ENCODE measurements at regions of chr5 and their contacts with region 1.

Region 1: GRCh38 chr5:13987843-13988464 is 43.5 kb upstream of the DNAH5 start:
- DNase-seq: no peak
- ATAC-seq: peak; percentile 50
- H3K4me3 Mint-ChIP-seq: no peak overlapping the region
- H3K27ac Mint-ChIP-seq: no peak overlapping the region
- H3K4me1 Mint-ChIP-seq: peaks cover 2% of the 10 kb centered on the region
- H3K27me3 Mint-ChIP-seq: peaks cover 15% of the 10 kb centered on the region
- CTCF ChIP-seq: peak; percentile 86

Region 2: DNA sequence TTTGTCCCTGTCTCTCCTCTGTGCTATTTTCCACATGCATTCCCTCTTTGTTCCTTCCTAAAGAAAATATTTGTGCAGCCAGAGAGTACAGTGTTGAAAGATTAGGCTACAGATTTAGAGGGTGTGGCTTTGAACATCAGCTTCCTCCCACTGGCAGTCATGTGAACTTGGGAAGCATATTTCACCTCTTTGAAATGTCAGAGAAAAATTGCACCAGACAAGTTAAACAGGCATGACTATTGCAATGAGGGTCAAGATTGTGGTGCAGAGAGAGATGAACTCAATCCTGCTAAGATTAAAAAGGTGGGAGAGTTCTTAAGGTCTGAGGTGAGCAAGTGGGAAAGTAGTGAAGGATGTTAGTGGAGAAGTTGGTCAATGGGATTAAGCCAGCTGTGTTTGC is 684.5 kb before region 1 on chr5:
- CTCF ChIA-PET with region 1: no interaction called
- POLR2A ChIA-PET with region 1: no interaction called
- intact Hi-C with region 1: no loop called
- DNase-seq: no peak
- ATAC-seq: no peak
- H3K4me3 Mint-ChIP-seq: no peak overlapping the region
- H3K27ac Mint-ChIP-seq: no peak overlapping the region
- H3K4me1 Mint-ChIP-seq: no peaks in the 10 kb centered on the region
- H3K27me3 Mint-ChIP-seq: no peaks in the 10 kb centered on the region
- CTCF ChIP-seq: no peak

Region 3: DNA sequence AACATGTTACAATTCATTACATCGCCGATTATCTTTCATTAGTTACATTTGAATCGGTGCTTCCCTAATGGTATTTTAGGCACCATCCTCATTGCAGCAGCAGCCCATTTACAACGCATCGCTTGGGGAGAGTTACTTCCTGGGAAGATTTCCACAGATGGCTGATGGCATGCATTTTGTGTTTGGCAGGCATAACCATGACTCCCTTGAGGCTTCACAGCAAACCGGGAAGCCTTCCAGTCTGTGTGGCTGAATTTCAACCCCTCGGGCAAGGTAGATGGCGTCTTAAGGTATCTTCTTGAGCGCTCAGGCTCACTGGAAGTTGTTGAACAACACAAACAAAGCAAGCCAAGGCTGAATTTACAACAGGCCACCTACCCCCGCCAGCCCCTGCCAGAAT is 41.8 kb before region 1 on chr5:
- CTCF ChIA-PET with region 1: no interaction called
- POLR2A ChIA-PET with region 1: no interaction called
- intact Hi-C with region 1: no loop called
- DNase-seq: no peak
- ATAC-seq: no peak
- H3K4me3 Mint-ChIP-seq: no peak overlapping the region
- H3K27ac Mint-ChIP-seq: no peak overlapping the region
- H3K4me1 Mint-ChIP-seq: no peaks in the 10 kb centered on the region
- H3K27me3 Mint-ChIP-seq: peaks cover 3% of the 10 kb centered on the region
- CTCF ChIP-seq: no peak

Region 4: DNA sequence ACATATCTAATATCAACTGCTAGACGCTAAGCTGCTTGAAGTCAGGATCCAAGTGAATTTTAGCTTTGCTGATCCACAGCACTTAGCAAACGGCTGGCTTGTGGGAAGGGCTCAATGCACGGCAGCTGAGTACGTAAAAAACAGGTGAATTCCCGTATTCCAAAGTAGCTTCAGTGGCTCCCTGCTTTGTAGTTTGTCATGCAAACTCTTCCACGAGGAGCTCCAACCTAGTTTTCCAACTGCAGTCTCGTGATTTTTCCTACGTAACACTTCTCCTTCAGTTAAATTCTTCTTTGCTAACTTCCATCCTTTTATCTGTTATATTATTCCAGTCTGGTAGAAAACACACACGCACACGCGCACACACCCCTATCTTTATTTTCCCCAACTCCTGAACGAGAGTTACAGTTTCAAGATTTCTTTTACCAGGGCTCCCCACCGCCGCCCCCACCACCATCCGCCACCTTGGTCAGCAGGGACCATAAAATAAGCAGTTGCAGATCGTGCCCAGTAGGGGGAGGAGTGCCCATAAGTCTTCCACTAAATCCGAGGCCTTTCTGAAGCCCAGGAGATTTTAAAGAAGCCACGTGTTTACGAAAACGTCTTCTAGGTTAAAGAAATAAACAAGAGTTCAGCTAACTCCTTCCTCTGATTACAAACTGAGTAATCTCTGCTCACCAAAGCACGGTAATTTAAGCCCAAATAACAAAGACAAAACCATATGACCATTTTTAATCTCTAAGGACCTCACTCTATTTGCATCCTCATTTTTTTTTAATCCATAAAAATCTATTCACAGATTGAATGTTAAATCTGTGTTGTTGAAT is 120.4 kb after region 1 on chr5:
- CTCF ChIA-PET with region 1: no interaction called
- POLR2A ChIA-PET with region 1: no interaction called
- intact Hi-C with region 1: loop called (anchors 2 kb)
- DNase-seq: no peak
- ATAC-seq: peak; percentile 85
- H3K4me3 Mint-ChIP-seq: peak overlapping the region; percentile 76
- H3K27ac Mint-ChIP-seq: peak overlapping the region; percentile 80
- H3K4me1 Mint-ChIP-seq: peaks cover 40% of the 10 kb centered on the region
- H3K27me3 Mint-ChIP-seq: peaks cover 1% of the 10 kb centered on the region
- CTCF ChIP-seq: no peak

Region 5: DNA sequence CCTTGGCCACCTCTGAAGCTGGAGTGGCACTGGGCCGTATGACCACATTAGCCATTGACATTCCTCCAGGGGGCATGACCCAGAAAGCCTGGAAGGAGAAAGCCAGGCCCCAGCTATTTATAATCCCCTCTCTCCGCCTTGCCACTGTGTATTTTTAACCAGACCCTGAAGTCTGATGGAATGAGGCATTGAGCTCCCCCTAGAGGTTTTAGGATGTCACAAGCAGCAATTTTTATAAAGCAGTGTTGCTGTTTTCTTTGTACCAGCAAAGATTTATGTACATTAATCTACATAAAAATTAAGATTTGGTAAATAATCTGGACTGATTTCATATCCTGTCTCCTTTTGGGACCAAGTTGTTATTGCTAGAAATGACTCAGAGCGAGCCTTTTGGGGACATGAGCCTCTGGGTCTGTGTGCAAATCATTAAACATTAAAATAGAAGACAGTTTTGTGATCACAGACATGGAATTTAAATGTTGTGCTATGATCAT is 282.3 kb after region 1 on chr5:
- CTCF ChIA-PET with region 1: interaction called, 8 read pairs
- POLR2A ChIA-PET with region 1: interaction called, 3 read pairs
- intact Hi-C with region 1: loop called (anchors 1 kb)
- DNase-seq: no peak
- ATAC-seq: peak; percentile 75
- H3K4me3 Mint-ChIP-seq: no peak overlapping the region
- H3K27ac Mint-ChIP-seq: no peak overlapping the region
- H3K4me1 Mint-ChIP-seq: peaks cover 53% of the 10 kb centered on the region
- H3K27me3 Mint-ChIP-seq: no peaks in the 10 kb centered on the region
- CTCF ChIP-seq: peak; percentile 67

Region 6: DNA sequence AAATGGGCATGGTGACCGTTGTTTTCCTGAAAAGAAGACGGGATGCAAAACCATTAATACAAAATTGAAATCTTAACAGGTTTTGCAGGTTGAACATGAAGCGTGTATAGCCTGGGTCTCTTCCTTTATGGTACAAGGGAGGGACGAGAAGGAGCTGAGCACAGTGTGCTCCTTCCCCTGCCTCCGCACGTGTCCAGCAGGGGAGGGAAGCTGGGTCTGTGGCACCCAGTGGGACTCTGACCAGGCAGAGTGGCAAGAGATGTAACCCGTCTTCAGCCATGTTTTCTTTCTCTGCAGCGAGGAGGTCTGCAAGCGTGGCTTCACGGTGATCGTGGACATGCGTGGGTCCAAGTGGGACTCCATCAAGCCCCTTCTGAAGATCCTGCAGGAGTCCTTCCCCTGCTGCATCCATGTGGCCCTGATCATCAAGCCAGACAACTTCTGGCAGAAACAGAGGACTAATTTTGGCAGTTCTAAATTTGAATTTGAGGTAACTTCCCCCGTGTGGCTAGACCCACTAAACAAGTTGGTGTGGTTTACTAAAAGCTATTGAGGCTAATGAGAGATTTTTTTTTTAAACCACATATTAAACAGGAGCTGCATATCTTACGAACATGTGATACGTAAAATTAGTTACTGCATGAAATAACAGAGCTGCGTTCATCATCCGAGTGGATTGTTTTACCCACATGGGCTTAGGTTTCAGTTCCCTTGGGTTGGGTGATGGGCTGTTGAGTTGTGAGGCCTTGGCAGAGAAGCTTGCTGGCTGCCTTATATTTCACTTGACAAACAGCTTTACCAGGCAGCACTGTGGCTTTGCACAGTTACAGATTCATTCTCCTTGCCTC is 298.8 kb after region 1 on chr5:
- CTCF ChIA-PET with region 1: no interaction called
- POLR2A ChIA-PET with region 1: interaction called, 11 read pairs
- intact Hi-C with region 1: no loop called
- DNase-seq: peak; percentile 26
- ATAC-seq: peak; percentile 98
- H3K4me3 Mint-ChIP-seq: peak overlapping the region; percentile 54
- H3K27ac Mint-ChIP-seq: peak overlapping the region; percentile 77
- H3K4me1 Mint-ChIP-seq: peaks cover 35% of the 10 kb centered on the region
- H3K27me3 Mint-ChIP-seq: no peaks in the 10 kb centered on the region
- CTCF ChIP-seq: no peak

Region 7: GRCh38 chr5:14351845-14352712 is 364.1 kb after region 1 on chr5:
- CTCF ChIA-PET with region 1: interaction called, 3 read pairs
- POLR2A ChIA-PET with region 1: no interaction called
- intact Hi-C with region 1: loop called (anchors 1 kb)
- DNase-seq: peak; percentile 52
- ATAC-seq: peak; percentile 98
- H3K4me3 Mint-ChIP-seq: no peak overlapping the region
- H3K27ac Mint-ChIP-seq: no peak overlapping the region
- H3K4me1 Mint-ChIP-seq: peaks cover 26% of the 10 kb centered on the region
- H3K27me3 Mint-ChIP-seq: no peaks in the 10 kb centered on the region
- CTCF ChIP-seq: peak; percentile 87

Region 8: DNA sequence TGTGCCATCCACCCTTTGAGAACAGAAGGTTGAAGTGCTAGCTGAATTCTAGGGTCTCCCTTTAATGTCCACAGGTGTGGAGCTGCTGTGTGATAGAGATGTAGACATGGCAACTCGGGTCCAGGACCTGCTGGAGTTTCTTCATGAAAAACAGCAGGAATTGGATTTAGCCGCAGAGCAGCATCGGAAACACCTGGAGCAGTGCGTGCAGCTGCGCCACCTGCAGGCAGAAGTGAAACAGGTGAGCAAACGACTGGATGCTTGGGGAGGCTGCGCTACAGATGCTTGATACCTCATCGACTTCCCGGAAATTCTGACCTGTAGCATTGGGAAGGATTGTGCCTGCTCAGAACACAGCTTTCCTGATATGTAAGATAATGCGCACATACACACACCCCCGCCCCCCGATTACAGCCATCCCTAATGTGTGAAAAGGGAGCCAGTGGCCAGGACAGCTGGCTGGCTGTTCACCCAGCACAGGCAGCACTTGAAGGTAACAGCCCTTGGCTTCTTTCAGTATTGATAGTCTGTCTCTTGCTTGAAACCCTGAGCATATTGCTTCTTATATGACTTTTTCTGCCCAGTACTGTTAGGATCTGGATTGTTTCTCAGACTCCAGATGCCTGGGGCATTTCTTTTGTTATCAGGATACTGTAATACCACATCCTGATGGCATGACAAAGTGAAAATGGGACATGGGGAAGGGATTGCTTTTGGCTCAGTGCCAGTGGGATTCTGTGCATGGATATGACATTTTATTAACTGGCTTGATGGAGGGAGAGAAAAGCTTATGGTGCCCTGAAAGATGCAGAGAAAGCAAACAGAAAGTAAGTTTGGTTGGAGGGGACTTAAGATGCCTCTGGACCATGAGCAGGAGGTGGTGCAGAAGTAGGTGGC is 376.9 kb after region 1 on chr5:
- CTCF ChIA-PET with region 1: interaction called, 12 read pairs
- POLR2A ChIA-PET with region 1: no interaction called
- intact Hi-C with region 1: loop called (anchors 1 kb)
- DNase-seq: no peak
- ATAC-seq: no peak
- H3K4me3 Mint-ChIP-seq: no peak overlapping the region
- H3K27ac Mint-ChIP-seq: no peak overlapping the region
- H3K4me1 Mint-ChIP-seq: peaks cover 19% of the 10 kb centered on the region
- H3K27me3 Mint-ChIP-seq: no peaks in the 10 kb centered on the region
- CTCF ChIP-seq: no peak

Region 9: GRCh38 chr5:15013654-15014463 is 1025.9 kb after region 1 on chr5:
- CTCF ChIA-PET with region 1: no interaction called
- POLR2A ChIA-PET with region 1: no interaction called
- intact Hi-C with region 1: loop called (anchors 1 kb)
- DNase-seq: no peak
- ATAC-seq: peak; percentile 40
- H3K4me3 Mint-ChIP-seq: no peak overlapping the region
- H3K27ac Mint-ChIP-seq: no peak overlapping the region
- H3K4me1 Mint-ChIP-seq: no peaks in the 10 kb centered on the region
- H3K27me3 Mint-ChIP-seq: peaks cover 7% of the 10 kb centered on the region
- CTCF ChIP-seq: peak; percentile 60